PC-9 (cell line): ENCODE measurements at regions of chr7 and their contacts with region 1.

Region 1: DNA sequence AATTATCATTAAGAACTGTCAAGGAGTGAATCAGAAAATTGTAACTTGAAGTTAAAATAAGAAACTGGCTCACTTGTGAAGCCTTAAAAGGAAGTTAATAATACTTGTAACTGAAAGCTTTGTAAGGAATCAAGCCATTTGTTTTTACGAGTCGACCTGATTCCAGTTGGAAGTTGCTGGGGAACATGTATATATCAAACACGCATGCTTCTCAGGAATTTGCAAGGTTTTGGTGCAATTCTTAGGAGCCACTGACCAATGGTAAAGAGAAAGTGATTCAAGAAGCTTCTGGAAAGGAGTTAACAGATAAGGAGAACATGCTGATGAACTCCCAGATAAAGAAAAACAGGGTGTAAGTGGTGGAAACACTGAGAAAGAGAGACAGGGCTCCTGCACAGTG is 56.4 kb downstream of the ETV1 start:
- DNase-seq: no peak
- H3K4me3 ChIP-seq: no peak overlapping the region
- H3K27ac ChIP-seq: no peak overlapping the region
- H3K4me1 ChIP-seq: no peaks in the 10 kb centered on the region
- H3K27me3 ChIP-seq: no peaks in the 10 kb centered on the region
- CTCF ChIP-seq: no peak

Region 2: DNA sequence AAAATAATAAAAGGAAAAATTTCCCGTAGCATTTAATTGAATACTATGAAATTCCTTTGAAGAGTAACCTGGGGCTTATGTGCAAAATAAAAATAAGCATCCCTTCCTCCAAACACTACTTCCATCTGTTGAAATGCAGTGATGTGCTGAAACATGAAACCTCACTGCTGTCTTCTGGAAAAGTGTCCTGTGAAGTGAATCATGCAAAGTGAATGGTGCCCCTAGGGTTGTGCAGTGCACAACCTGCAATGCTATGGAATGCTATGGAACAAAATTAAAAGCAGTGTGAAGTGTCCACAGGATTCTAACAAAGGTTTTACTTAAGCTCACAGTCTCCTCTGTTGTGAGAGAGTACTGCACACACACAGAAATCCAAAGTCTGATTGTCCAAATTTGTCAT is 424.5 kb before region 1 on chr7:
- CTCF ChIA-PET with region 1: interaction called, 26 read pairs
- POLR2A ChIA-PET with region 1: no interaction called
- intact Hi-C with region 1: no loop called
- DNase-seq: no peak
- H3K4me3 ChIP-seq: no peak overlapping the region
- H3K27ac ChIP-seq: no peak overlapping the region
- H3K4me1 ChIP-seq: no peaks in the 10 kb centered on the region
- H3K27me3 ChIP-seq: no peaks in the 10 kb centered on the region
- CTCF ChIP-seq: no peak

Region 3: GRCh38 chr7:13829914-13830900 is 102.9 kb before region 1 on chr7:
- CTCF ChIA-PET with region 1: no interaction called
- POLR2A ChIA-PET with region 1: no interaction called
- intact Hi-C with region 1: no loop called
- DNase-seq: no peak
- H3K4me3 ChIP-seq: no peak overlapping the region
- H3K27ac ChIP-seq: no peak overlapping the region
- H3K4me1 ChIP-seq: no peaks in the 10 kb centered on the region
- H3K27me3 ChIP-seq: no peaks in the 10 kb centered on the region
- CTCF ChIP-seq: no peak

Region 4: DNA sequence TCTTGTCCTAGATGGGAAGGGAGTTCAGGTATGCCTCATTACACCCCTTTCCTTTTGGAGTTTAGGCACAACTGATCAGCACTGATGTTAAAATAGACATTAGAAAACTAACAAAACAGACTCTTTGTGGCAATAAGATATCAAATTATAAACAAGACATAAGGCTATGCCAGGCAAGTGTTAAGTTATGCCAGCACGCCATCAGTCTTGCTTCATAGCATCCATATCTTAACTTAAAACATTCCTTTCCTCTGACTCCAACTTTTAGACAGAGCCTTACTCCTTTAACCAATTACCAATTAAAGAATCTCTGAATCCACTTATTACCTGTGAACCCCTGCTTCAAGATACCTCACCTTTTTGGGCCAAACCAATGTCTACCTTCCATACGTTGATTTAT is 182.6 kb after region 1 on chr7:
- CTCF ChIA-PET with region 1: no interaction called
- POLR2A ChIA-PET with region 1: no interaction called
- intact Hi-C with region 1: no loop called
- DNase-seq: no peak
- H3K4me3 ChIP-seq: no peak overlapping the region
- H3K27ac ChIP-seq: no peak overlapping the region
- H3K4me1 ChIP-seq: no peaks in the 10 kb centered on the region
- H3K27me3 ChIP-seq: no peaks in the 10 kb centered on the region
- CTCF ChIP-seq: no peak